ENCODE measurements at regions of chr2 and their contacts with region 1.

Region 1: DNA sequence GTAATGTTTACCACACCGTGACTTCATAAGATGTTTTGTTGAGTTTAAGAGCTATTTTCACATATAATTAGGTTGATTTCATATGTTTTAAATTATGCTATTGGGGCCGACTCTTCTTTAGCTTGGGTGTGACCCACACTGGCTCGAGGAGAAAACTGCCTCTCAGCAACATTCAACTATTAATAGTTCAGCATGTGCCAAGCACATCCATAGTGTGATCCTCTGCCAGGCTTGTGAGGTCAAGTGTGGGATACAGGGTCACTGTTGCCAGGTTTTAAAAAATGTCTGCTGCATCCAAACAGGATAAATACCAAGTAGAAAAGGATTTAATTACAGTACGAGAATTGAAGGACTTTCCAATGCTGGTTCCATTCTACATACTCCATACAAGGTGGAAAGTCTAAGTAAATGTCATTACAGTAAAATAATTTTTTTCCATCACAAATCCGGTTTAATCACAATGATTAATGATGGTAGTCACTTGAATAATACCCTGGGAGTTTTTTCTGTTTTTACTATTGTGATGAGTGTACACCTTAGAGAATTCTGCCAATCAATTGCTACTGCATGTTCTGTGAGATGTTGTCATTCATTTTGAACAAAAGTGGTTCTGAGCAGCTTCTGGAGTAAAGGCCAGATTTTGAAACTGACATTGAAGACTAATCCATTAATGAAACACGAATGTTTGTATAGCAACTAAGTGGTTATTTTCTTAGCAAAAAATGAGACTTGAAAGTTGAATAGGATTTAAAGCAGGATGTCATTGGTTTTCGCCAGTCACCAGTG is 84.5 kb downstream of the ABI2 start:
- DNase-seq: no peak
- H3K4me3 ChIP-seq: no peak overlapping the region
- H3K27ac ChIP-seq: no peak overlapping the region
- H3K4me1 ChIP-seq: no peaks in the 10 kb centered on the region
- H3K27me3 ChIP-seq: no peaks in the 10 kb centered on the region
- CTCF ChIP-seq: no peak
- EP300 ChIP-seq: no peak
- POLR2A ChIP-seq: no peak

Region 2: GRCh38 chr2:203394519-203395227 is 18.1 kb before region 1 on chr2:
- intact Hi-C with region 1: loop called in 1 of 4 experiments (anchors 1 kb)
- DNase-seq: no peak
- H3K4me3 ChIP-seq: no peak overlapping the region
- H3K27ac ChIP-seq: no peak overlapping the region
- H3K4me1 ChIP-seq: no peaks in the 10 kb centered on the region
- H3K27me3 ChIP-seq: no peaks in the 10 kb centered on the region
- CTCF ChIP-seq: no peak
- EP300 ChIP-seq: no peak
- POLR2A ChIP-seq: no peak

Region 3: DNA sequence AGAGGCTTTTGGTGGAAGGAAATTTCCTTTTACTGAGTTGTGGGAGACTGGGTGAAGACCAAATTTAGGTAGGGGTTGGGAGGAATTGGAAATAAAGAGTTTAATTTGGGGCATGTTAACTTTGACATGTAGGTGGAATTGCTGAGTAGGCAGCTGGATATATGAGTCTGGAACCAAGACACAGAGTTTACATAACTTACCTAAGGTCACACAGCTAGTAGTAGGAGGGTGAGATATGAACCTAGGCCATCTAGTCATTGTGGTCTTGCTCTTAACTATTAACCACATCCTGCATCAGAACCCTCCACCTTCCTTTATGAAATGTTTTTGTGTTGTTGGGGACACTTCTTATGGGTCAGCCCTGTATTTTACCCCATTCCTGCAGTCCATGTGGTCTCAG is 636.9 kb after region 1 on chr2:
- intact Hi-C with region 1: no loop called
- DNase-seq: no peak
- H3K4me3 ChIP-seq: no peak overlapping the region
- H3K27ac ChIP-seq: no peak overlapping the region
- H3K4me1 ChIP-seq: no peaks in the 10 kb centered on the region
- H3K27me3 ChIP-seq: no peaks in the 10 kb centered on the region
- CTCF ChIP-seq: no peak
- EP300 ChIP-seq: no peak
- POLR2A ChIP-seq: no peak

Measured in ovary (tissue), 10 donors.